Spleen (tissue), 13 donors: ENCODE measurements at regions of chr7 and their contacts with region 1.

Region 1: DNA sequence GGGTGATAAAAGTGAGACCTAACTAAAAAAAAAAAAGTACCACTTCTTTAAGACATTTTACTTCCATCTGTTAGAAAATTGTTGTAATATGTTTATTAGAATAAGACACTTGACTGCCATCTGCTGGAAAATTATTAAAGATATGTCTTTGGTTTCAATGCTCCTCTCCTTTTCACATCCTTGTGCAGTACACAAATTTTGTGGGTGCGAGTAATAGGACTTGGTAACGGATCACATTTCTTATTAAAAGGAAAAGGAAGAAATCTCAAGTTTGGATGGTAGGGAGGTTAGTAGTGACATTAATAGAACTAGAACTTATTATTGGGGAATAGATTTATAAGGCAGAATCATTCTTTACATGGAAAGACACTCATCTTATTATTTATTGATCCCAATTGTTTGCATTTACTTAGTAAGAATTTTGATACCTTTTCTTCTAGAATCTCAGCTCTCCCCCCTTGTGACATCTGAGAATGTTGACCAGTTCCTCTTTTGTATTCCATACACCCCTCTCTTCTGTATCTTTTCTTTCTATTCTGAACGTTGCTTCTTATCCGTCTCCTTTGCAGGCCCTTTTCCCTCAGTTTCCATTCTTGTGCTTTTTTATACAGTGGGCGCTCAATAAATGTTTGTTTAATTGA is 43.1 kb upstream of the RPA3 start:
- DNase-seq: no peak
- H3K4me3 ChIP-seq: peak overlapping the region; percentile 29 to 63 (median 42)
- H3K27ac ChIP-seq: peak overlapping the region; percentile 37 to 87 (median 82)
- H3K4me1 ChIP-seq: peaks cover 6 to 52% (median 30%) of the 10 kb centered on the region in 6 donors
- H3K27me3 ChIP-seq: no peaks in the 10 kb centered on the region
- CTCF ChIP-seq: peak in 10 of 11 experiments; percentile 13 to 65 (median 48)
- POLR2A ChIP-seq: no peak

Region 2: GRCh38 chr7:7181519-7182155 is 579.8 kb before region 1 on chr7:
- intact Hi-C with region 1: no loop called
- DNase-seq: peak; percentile 81
- H3K4me3 ChIP-seq: peak overlapping the region; percentile 47 to 92 (median 82)
- H3K27ac ChIP-seq: peak overlapping the region; percentile 94 to 100 (median 99)
- H3K4me1 ChIP-seq: peaks cover 21 to 57% (median 40%) of the 10 kb centered on the region in 6 donors
- H3K27me3 ChIP-seq: no peaks in the 10 kb centered on the region
- CTCF ChIP-seq: no peak
- POLR2A ChIP-seq: no peak

Region 3: GRCh38 chr7:7304705-7305450 is 456.6 kb before region 1 on chr7:
- intact Hi-C with region 1: no loop called
- DNase-seq: no peak
- H3K4me3 ChIP-seq: no peak overlapping the region
- H3K27ac ChIP-seq: no peak overlapping the region
- H3K4me1 ChIP-seq: peaks cover 0 to 6% (median 0%) of the 10 kb centered on the region in 6 donors
- H3K27me3 ChIP-seq: no peaks in the 10 kb centered on the region
- CTCF ChIP-seq: no peak
- POLR2A ChIP-seq: no peak

Region 4: DNA sequence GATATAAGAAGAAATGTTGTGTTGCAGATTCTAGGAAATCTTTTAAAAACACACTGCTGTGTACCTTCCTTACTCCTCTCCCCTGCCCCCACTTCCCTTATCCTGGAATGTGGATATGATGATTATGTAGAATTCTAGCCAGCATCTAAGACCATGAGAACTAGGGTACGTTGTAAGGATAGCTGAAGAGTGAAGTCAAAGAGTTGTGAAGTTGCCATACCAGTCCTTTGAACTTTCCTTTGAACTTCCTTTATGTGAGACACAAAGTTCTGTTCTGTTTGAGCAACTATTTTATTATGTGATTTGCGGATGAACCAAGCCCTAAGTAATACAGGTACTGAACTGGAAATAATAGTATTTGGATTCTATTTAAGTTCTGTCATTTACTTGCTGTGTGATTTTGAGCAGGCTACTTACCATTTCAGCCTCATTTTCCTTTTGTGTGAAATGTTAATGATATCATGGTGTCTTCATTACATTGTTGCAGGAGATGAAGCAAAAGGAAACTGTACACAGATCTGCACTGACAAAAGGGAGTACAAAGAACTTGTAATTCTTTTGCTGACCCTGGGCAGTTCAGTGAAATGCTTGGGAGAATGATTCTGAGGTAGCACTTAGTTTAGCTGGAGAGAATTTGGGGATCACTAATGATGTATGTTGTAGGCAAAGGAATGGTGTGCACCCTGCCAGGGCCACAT is 74.5 kb before region 1 on chr7:
- intact Hi-C with region 1: loop called (anchors 5 kb)
- DNase-seq: no peak
- H3K4me3 ChIP-seq: no peak overlapping the region
- H3K27ac ChIP-seq: peak overlapping the region in 5 of 8 donors; percentile 41 to 73 (median 53)
- H3K4me1 ChIP-seq: peaks cover 5 to 37% (median 20%) of the 10 kb centered on the region in 6 donors
- H3K27me3 ChIP-seq: no peaks in the 10 kb centered on the region
- CTCF ChIP-seq: no peak
- POLR2A ChIP-seq: no peak

Region 5: DNA sequence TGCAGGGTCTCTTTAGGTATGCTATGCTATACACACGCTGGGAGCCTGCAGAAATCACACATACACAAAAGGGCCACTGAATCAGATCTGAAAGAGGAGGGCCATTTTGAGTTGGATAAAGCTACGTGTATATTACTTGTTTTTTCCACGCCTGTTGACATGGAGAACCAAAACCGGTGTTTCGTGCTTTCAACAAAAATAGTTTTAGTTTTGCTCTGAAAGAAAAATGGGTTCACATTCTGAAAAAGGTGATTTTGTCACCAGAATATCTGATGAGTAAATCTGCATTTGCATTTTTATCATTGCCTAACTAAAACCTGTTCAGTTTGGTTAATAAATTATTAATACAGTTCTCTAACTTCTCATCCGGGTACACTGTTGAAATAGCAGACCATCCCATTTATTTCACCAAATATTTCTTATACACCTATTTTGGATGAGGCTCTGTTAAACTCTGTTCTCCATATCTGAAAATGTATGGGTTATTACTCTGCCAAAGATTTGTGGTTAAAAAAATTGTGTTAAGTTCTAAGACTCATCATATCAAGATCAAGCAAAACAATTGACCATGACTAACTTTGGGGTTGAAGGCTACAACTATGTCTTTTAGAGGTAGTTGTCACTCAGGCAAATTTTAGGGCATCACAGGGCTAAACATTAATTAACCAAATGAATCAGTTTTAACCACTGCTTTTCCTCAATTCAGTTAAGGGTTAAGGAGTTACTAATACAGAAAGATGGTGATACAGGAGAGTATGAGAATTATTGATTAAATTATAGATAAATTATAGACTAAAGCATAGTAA is 58.2 kb after region 1 on chr7:
- intact Hi-C with region 1: loop called (anchors 10 kb)
- DNase-seq: no peak
- H3K4me3 ChIP-seq: no peak overlapping the region
- H3K27ac ChIP-seq: no peak overlapping the region
- H3K4me1 ChIP-seq: peaks cover 5 to 67% (median 18%) of the 10 kb centered on the region in 6 donors
- H3K27me3 ChIP-seq: no peaks in the 10 kb centered on the region
- CTCF ChIP-seq: no peak
- POLR2A ChIP-seq: no peak